ENCODE measurements at regions of chr4 and their contacts with region 1.

Region 1: GRCh38 chr4:70839589-70840093 is at the start of gene GRSF1:
- DNase-seq: peak; percentile 97
- H3K4me3 ChIP-seq: peak within 1 kb of the TSS; percentile 83 to 99 (median 98)
- H3K27ac ChIP-seq: peak within 1 kb of the TSS; percentile 91 to 99 (median 95)
- H3K4me1 ChIP-seq: peaks cover 26 to 33% (median 30%) of the 10 kb centered on the region in 4 donors
- H3K27me3 ChIP-seq: no peaks in the 10 kb centered on the region
- CTCF ChIP-seq: peak in 1 of 3 experiments; percentile 18
- EP300 ChIP-seq: no peak
- POLR2A ChIP-seq: no peak
- total RNA-seq, gene GRSF1: 47.8 to 68.8 (median 53.9) TPM

Region 2: DNA sequence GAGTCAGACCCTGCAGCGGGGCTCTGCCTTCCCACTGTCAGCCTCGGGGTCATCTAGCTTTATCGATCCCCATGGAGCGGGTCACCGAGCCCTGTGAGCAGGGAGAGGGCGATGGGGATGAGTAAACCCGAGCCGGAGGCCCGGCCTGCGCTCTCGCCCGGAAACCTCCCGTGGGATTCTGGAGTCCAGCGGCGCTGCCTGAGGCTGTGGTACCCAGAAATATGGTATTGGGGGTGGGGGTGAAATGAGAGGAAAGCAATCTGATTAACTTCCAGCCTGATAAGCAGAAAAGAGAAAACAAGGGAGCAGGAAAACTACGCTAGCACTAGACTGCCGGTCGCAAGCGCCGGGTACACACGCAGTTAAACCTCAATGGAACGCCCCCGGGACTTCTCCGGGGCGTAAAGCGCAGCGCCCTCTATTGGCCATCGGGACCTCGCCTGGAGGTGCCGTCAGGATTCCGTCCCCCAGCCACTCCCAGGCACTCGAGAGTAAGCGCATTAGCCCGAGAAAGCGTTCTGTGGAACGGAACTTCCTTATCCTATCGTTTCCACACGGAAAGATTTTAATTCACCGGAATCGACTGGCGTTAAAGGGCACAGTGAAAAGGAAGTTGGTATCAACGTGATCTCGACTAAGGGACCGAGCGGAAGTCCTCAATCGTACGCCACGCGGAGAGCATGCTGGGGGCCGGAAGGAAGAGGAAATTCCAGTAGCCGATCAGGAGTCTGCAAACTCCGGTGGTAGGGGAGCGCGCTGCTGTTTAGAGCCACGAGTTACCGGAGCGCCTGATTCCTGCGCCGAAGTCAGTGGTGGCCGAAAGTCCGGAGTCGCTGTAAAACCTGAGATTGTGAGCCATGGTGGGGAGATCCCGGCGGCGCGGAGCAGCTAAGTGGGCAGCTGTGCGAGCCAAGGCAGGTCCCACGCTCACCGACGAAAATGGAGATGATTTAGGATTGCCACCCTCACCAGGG is 151.5 kb before region 1 on chr4 and contains the start of gene UTP3:
- intact Hi-C with region 1: loop called (anchors 5 kb)
- DNase-seq: peak; percentile 98
- H3K4me3 ChIP-seq: peak within 1 kb of the TSS; percentile 79 to 94 (median 90)
- H3K27ac ChIP-seq: peak within 1 kb of the TSS; percentile 91 to 97 (median 95)
- H3K4me1 ChIP-seq: peaks cover 30 to 46% (median 38%) of the 10 kb centered on the region in 4 donors
- H3K27me3 ChIP-seq: no peaks in the 10 kb centered on the region
- CTCF ChIP-seq: peak; percentile 88 to 95 (median 92)
- EP300 ChIP-seq: no peak
- POLR2A ChIP-seq: no peak
- total RNA-seq, gene UTP3: 19.9 to 31.3 (median 21.8) TPM

Region 3: DNA sequence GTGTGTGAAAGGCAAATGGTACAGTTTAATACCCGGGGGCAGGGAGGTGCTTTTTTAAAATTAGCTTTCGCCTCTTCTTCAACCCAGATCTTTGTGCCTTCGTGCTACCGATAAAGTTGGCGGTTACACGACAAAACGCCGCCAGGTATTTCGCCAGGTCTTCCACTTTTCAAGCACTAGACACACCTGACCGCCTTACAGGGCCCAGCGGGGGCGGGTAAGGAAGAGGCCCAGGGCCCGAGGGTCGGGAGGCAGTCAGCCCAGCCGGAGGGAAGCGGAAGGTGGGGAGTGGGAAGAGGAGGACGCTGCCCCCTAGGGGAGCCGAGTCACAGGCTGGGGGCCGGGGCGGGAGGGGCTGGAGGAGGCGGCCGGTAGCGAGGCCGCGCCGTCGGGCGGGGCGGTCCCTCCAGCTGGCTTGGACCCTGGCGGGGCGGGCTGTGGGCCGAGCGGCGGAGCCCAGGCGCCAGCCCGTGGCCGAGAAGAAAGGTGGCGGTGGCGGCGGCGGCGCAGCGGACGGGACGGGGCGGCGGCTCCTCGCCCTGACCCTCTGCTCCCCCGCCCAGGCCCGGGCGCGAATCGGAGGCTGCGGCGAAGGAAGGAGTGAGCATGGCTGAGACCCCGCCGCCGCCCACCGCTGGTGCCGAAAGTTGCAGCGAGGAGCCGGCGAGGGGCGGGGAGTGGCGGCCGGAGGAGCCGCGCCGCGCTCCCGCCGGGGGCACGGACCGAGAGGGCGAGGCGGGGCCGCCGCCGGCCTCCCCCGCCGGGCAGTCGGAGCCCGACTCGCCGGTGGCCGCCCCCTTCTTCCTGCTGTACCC is 135.1 kb before region 1 on chr4:
- intact Hi-C with region 1: loop called (anchors 5 kb)
- DNase-seq: peak; percentile 93
- H3K4me3 ChIP-seq: peak overlapping the region; percentile 92 to 94 (median 94)
- H3K27ac ChIP-seq: peak overlapping the region; percentile 93 to 98 (median 95)
- H3K4me1 ChIP-seq: peaks cover 19 to 30% (median 28%) of the 10 kb centered on the region in 4 donors
- H3K27me3 ChIP-seq: no peaks in the 10 kb centered on the region
- CTCF ChIP-seq: peak; percentile 10 to 43 (median 43)
- EP300 ChIP-seq: no peak
- POLR2A ChIP-seq: no peak

Region 4: DNA sequence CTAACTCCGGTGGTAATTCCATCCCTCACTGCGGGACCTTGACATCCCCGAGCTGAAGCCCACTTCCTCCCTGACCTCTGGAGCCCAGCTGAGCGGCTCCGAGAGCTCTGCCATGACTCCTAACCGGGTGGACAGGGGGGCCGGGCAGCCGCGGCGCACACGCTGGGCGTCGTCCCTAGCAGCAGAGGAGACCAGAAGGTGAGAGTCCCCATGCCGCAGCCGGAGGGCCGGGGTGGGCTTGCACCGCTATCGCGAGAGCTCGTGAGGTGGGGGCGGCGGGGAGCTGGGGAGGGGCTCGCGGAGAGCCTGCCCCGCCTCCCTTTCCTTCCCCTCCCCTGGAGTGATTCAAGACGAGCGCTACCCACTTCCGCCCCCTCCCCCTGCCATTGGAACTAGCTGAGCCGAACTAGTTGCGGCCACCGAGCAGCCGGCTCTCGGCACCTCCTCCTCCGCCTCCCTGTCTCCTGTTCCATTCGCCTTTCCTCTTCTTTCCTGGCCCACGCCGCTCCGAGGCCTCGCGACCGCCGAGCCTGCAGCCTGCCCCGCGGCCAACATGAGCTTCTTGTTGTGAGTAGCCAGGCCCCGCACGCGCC is 62.4 kb after region 1 on chr4 and contains the start of gene MOB1B:
- intact Hi-C with region 1: loop called (anchors 5 kb)
- DNase-seq: peak; percentile 96
- H3K4me3 ChIP-seq: peak within 1 kb of the TSS; percentile 70 to 83 (median 74)
- H3K27ac ChIP-seq: peak within 1 kb of the TSS; percentile 84 to 89 (median 87)
- H3K4me1 ChIP-seq: peaks cover 0 to 30% (median 21%) of the 10 kb centered on the region in 4 donors
- H3K27me3 ChIP-seq: no peaks in the 10 kb centered on the region
- CTCF ChIP-seq: peak in 1 of 3 experiments; percentile 59
- EP300 ChIP-seq: no peak
- POLR2A ChIP-seq: no peak
- total RNA-seq, gene MOB1B: 15.0 to 19.4 (median 16.6) TPM

Region 5: GRCh38 chr4:70993181-70994068 is 153.8 kb after region 1 on chr4 and contains the start of gene DCK:
- intact Hi-C with region 1: loop called (anchors 5 kb)
- DNase-seq: peak; percentile 97
- H3K4me3 ChIP-seq: peak within 1 kb of the TSS; percentile 78 to 88 (median 80)
- H3K27ac ChIP-seq: peak within 1 kb of the TSS; percentile 85 to 90 (median 87)
- H3K4me1 ChIP-seq: peaks cover 11 to 47% (median 38%) of the 10 kb centered on the region in 4 donors
- H3K27me3 ChIP-seq: no peaks in the 10 kb centered on the region
- CTCF ChIP-seq: no peak
- EP300 ChIP-seq: no peak
- POLR2A ChIP-seq: no peak
- total RNA-seq, gene DCK: 13.7 to 16.8 (median 14.8) TPM

Region 6: GRCh38 chr4:71009890-71010588 is 170.4 kb after region 1 on chr4:
- intact Hi-C with region 1: loop called (anchors 5 kb)
- DNase-seq: no peak
- H3K4me3 ChIP-seq: no peak overlapping the region
- H3K27ac ChIP-seq: no peak overlapping the region
- H3K4me1 ChIP-seq: peaks cover 0 to 7% (median 2%) of the 10 kb centered on the region in 4 donors
- H3K27me3 ChIP-seq: no peaks in the 10 kb centered on the region
- CTCF ChIP-seq: peak; percentile 49 to 64 (median 62)
- EP300 ChIP-seq: no peak
- POLR2A ChIP-seq: no peak